ENCODE measurements at regions of chr2 and their contacts with region 1.

Region 1: GRCh38 chr2:101151141-101151858 is at the start of gene TBC1D8:
- DNase-seq: peak; percentile 37
- H3K4me3 ChIP-seq: peak within 1 kb of the TSS; percentile 68
- H3K27ac ChIP-seq: no peak within 1 kb of the TSS
- H3K4me1 ChIP-seq: peaks cover 6% of the 10 kb centered on the region
- CTCF ChIP-seq: no peak
- total RNA-seq, gene TBC1D8: 0.03 and 0.22 TPM in 2 replicates

Region 2: GRCh38 chr2:100610381-100610831 is 540.9 kb before region 1 on chr2:
- CTCF ChIA-PET with region 1: no interaction called
- POLR2A ChIA-PET with region 1: no interaction called
- intact Hi-C with region 1: loop called (anchors 5 kb)
- DNase-seq: peak; percentile 50
- H3K4me3 ChIP-seq: no peak overlapping the region
- H3K27ac ChIP-seq: no peak overlapping the region
- H3K4me1 ChIP-seq: no peaks in the 10 kb centered on the region
- CTCF ChIP-seq: peak; percentile 77

Region 3: GRCh38 chr2:101012706-101013181 is 138.6 kb before region 1 on chr2:
- CTCF ChIA-PET with region 1: no interaction called
- POLR2A ChIA-PET with region 1: no interaction called
- intact Hi-C with region 1: loop called (anchors 1 kb)
- DNase-seq: peak; percentile 47
- H3K4me3 ChIP-seq: no peak overlapping the region
- H3K27ac ChIP-seq: no peak overlapping the region
- H3K4me1 ChIP-seq: no peaks in the 10 kb centered on the region
- CTCF ChIP-seq: peak; percentile 92

Region 4: DNA sequence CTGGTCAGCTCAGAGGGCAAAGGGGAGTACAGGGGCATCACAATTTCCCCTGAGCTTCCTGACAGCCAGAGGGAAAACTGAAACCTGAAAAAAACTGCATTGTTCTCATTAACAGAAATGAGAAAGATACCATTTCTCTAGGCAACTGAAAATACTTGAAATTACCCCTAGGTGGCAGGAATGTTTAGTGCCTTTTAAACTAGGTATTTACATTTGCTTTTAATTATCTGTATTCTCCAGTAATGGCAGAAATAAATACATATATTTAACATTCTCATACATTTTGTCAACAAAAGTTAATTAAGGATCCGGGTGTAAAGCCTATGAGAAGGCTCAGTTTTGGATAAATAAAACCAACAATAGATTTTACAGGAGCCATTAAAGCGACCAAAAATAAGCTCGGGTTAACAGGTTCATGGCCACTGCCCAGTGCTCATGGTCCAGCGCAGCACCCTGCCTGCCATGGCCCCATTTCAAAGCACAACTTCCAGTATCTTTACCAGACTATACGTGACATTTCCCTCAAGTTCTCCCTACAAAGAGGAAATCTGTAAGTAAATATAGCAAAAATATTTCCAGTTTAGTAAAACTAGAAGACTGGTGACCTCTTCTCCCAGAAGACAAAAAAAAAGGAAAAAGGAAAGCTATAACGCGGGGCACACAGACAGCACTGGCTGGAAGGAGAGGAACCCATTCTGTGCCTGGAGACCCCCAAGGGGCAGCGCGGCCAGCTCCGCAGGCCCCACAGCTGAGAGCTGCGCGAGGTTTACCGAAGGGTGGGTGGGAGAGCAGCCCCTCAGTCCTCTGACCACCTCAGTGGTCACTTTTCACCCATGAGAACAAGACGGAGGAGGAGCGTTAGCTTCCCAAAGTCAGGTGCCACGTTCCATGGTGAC is 114.5 kb before region 1 on chr2:
- CTCF ChIA-PET with region 1: no interaction called
- POLR2A ChIA-PET with region 1: no interaction called
- intact Hi-C with region 1: loop called (anchors 2 kb)
- DNase-seq: peak; percentile 14
- H3K4me3 ChIP-seq: no peak overlapping the region
- H3K27ac ChIP-seq: no peak overlapping the region
- H3K4me1 ChIP-seq: no peaks in the 10 kb centered on the region
- CTCF ChIP-seq: peak; percentile 75

Region 5: GRCh38 chr2:101252408-101253012 is 101.2 kb after region 1 on chr2 and contains the start of gene CNOT11:
- CTCF ChIA-PET with region 1: no interaction called
- POLR2A ChIA-PET with region 1: no interaction called
- intact Hi-C with region 1: loop called (anchors 2 kb)
- DNase-seq: peak; percentile 99
- H3K4me3 ChIP-seq: peak within 1 kb of the TSS; percentile 96
- H3K27ac ChIP-seq: peak within 1 kb of the TSS; percentile 77
- H3K4me1 ChIP-seq: peaks cover 39% of the 10 kb centered on the region
- CTCF ChIP-seq: no peak
- total RNA-seq, gene CNOT11: 45.7 and 55.5 TPM in 2 replicates

Measured in OCI-LY7 (cell line).